WTC11 (cell line): ENCODE measurements at regions of chr9 and their contacts with region 1.

Region 1: DNA sequence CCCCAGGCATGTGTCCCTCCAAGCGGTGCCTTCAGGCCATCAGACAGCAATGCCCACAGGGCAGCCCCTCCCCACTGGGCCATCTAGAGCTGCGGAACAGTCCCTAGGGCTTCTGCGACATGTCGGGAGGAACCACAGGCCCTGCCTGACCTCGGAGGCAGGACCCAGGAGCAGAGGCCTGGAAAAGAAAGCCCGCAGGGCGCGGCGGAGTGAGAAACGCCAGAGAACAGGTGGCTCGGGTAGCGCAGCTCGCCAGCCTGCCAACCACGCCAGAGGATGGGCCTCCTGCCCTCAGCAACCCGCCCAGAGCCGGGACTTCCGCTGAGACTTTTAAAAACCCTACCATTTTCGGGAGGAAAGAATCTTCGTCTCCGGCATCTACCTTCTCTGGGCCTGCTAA is 715 bp downstream of the LCN8 start:
- DNase-seq: no peak
- ATAC-seq: no peak
- H3K4me3 Mint-ChIP-seq: no peak overlapping the region
- H3K27ac Mint-ChIP-seq: no peak overlapping the region
- H3K4me1 Mint-ChIP-seq: peaks cover 8% of the 10 kb centered on the region
- H3K27me3 Mint-ChIP-seq: no peaks in the 10 kb centered on the region; the same call in 1 of the 2 replicates
- CTCF ChIP-seq: no peak

Region 2: GRCh38 chr9:136721339-136722092 is 35.8 kb before region 1 on chr9:
- CTCF ChIA-PET with region 1: interaction called, 12 read pairs
- POLR2A ChIA-PET with region 1: no interaction called
- DNase-seq: no peak
- ATAC-seq: peak; percentile 1
- H3K4me3 Mint-ChIP-seq: no peak overlapping the region
- H3K27ac Mint-ChIP-seq: no peak overlapping the region
- H3K4me1 Mint-ChIP-seq: peaks cover 12% of the 10 kb centered on the region
- H3K27me3 Mint-ChIP-seq: no peaks in the 10 kb centered on the region
- CTCF ChIP-seq: no peak

Region 3: DNA sequence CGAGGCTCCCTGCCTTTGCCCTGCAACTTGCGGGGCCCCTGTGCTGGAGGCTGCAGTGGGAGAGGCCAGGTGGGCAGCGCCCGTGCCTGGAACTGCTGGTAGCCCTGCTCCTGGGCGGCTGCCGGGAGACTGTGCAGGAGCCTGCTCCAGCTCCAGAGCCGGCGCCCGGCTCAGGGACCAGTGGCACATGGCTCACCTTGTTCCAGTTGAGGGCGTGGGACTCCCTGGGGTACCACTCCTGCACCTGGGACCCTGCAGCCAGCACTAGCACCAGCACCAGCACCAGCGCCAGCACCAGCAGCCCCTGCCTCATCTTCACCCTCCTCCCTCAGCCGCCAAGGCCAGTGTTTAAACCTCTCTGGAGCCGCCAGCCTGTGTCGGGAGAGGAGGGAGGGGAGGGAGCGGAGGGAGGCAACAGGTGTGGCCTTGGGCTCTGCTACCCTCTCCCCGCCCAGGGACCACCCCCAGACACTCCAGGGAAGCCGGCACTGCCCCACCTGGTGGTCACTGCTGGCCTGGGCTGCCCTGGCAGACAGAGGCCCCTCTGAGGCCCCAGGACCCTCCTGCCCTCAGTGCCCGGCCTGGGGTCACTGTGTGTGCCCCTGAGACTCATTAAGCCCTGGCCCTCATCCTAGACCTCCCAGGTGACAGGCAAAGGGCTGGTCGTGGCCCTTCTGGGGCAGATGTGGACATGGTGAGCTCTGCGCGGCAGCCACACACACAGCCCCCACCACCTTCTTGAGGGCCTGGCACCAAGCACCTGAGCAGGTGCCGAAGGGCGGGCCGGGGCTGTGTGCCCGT is 14.5 kb before region 1 on chr9 and contains the start of gene LCN10:
- CTCF ChIA-PET with region 1: interaction called, 39 read pairs
- POLR2A ChIA-PET with region 1: no interaction called
- DNase-seq: peak; percentile 82
- ATAC-seq: peak; percentile 85
- H3K4me3 Mint-ChIP-seq: peak within 1 kb of the TSS; percentile 37
- H3K27ac Mint-ChIP-seq: no peak within 1 kb of the TSS
- H3K4me1 Mint-ChIP-seq: no peaks in the 10 kb centered on the region; the same call in none of the 2 replicates
- H3K27me3 Mint-ChIP-seq: no peaks in the 10 kb centered on the region
- CTCF ChIP-seq: no peak
- total RNA-seq, gene LCN10: 2.4 to 3.7 TPM (median 3.3 TPM) in 3 replicates

Region 4: GRCh38 chr9:136779808-136780207 is 22.5 kb after region 1 on chr9:
- CTCF ChIA-PET with region 1: interaction called, 14 read pairs
- POLR2A ChIA-PET with region 1: no interaction called
- DNase-seq: no peak
- ATAC-seq: no peak
- H3K4me3 Mint-ChIP-seq: no peak overlapping the region
- H3K27ac Mint-ChIP-seq: no peak overlapping the region
- H3K4me1 Mint-ChIP-seq: no peaks in the 10 kb centered on the region
- H3K27me3 Mint-ChIP-seq: peaks cover 53% of the 10 kb centered on the region
- CTCF ChIP-seq: no peak